K562 (cell line): ENCODE measurements at regions of chr9 and their contacts with region 1.

Region 1: DNA sequence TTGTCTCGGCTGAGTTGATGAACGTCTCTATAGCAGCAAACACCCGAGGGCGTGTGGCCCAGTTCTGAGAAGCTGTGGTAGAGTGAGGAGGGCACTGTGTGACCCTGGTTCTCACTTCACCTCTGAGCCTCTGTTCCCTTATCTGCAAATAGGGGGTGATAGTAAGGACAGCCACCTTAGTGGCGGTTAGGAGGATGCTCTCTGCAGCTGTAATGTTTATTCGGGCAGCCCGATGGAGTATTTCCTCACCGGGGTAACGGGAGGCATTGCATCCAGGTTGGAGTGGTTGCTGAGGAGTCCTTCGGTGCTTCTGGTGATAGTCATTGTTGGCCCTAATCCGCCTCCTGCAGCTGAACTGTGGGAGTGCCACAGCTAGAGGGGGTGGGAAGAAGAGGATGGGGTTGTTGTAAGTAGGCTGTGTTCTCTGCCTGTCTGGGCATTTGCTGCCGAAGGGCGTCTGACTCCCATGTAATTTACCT is 13.9 kb downstream of the PRRC2B start:
- DNase-seq: peak; percentile 34 to 61 (median 48)
- ATAC-seq: peak; percentile 77
- H3K4me3 ChIP-seq: no peak overlapping the region
- H3K27ac ChIP-seq: no peak overlapping the region
- H3K4me1 ChIP-seq: peaks cover 37 to 40% of the 10 kb centered on the region in 2 experiments; a peak in 4 of 5 replicates
- H3K27me3 ChIP-seq: no peaks in the 10 kb centered on the region
- CTCF ChIP-seq: peak; percentile 45 to 57 (median 53); a peak in 5 of 6 replicates
- EP300 ChIP-seq: no peak
- POLR2A ChIP-seq: no peak
- RAD21 ChIP-seq: peak in 1 of 2 experiments; percentile 14; a peak in 1 of 4 replicates

Region 2: GRCh38 chr9:131266266-131267229 is 141.2 kb before region 1 on chr9:
- CTCF ChIA-PET with region 1: no interaction called
- POLR2A ChIA-PET with region 1: no interaction called
- in situ Hi-C with region 1: no loop called
- intact Hi-C with region 1: no loop called
- DNase-seq: peak; percentile 38 to 66 (median 60)
- ATAC-seq: peak; percentile 2; the same call in 2 of the 3 replicates
- H3K4me3 ChIP-seq: no peak overlapping the region
- H3K27ac ChIP-seq: no peak overlapping the region
- H3K4me1 ChIP-seq: peaks cover 21 to 62% of the 10 kb centered on the region in 2 experiments
- H3K27me3 ChIP-seq: no peaks in the 10 kb centered on the region; a peak in 1 of 5 replicates
- CTCF ChIP-seq: no peak
- EP300 ChIP-seq: no peak
- POLR2A ChIP-seq: no peak
- RAD21 ChIP-seq: no peak

Region 3: GRCh38 chr9:131394464-131395156 is 13.1 kb before region 1 on chr9:
- CTCF ChIA-PET with region 1: no interaction called
- POLR2A ChIA-PET with region 1: interaction called, 78 read pairs
- in situ Hi-C with region 1: no loop called
- intact Hi-C with region 1: no loop called
- DNase-seq: peak; percentile 64 to 85 (median 80)
- ATAC-seq: peak; percentile 70
- H3K4me3 ChIP-seq: peak overlapping the region; percentile 96
- H3K27ac ChIP-seq: peak overlapping the region; percentile 89
- H3K4me1 ChIP-seq: peaks cover 26 to 33% of the 10 kb centered on the region in 2 experiments
- H3K27me3 ChIP-seq: no peaks in the 10 kb centered on the region
- CTCF ChIP-seq: no peak
- EP300 ChIP-seq: no peak
- POLR2A ChIP-seq: no peak; the same call in 1 of the 2 replicates
- RAD21 ChIP-seq: no peak

Region 4: DNA sequence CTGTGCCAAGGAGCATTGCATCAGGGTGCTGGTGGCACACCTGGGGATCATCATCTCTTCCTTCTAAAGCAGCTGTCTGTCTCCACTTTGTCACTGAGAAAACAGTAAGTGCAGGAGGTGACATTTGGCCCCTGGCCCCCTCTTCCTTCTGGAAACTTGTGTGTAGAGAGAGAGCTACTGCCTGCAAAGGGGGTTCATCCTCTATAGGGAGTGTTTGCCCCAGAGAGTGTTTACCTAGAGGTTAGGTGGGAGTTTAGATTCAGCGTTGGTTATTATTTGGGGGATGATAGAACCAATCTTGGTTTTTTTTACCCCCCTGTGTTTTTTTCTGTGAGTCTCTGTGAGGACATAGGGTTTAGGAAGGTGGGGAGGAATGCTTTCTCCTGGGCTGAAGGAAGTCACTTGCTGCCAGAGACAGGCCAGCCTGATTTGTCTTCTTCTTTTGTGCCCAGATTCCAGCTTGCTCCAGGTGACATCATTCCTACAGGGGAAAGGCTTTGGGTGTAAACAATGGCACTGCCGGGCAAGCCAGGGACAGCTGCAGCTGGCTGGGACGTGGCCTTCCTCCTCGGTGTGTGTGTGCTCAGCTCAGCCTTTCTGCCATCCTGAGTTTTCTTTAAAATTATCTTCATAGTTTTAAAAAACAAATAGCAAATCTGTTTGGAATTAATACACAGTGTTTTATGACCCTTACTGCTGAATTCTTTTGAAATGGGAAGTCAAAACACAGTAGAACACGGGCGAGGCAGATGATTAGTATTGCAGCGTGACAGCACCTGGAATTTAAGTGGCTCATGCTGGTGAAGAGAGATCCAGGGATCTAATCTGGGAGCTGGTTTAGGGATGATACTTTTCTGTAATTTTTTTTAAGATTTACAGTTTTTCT is 10.6 kb after region 1 on chr9:
- CTCF ChIA-PET with region 1: no interaction called
- POLR2A ChIA-PET with region 1: interaction called, 43 read pairs
- in situ Hi-C with region 1: no loop called
- intact Hi-C with region 1: no loop called
- DNase-seq: no peak
- ATAC-seq: no peak
- H3K4me3 ChIP-seq: no peak overlapping the region
- H3K27ac ChIP-seq: peak overlapping the region; percentile 28; the same call in 2 of the 3 replicates
- H3K4me1 ChIP-seq: peaks cover 26% of the 10 kb centered on the region in 2 experiments; a peak in 4 of 5 replicates
- H3K27me3 ChIP-seq: no peaks in the 10 kb centered on the region
- CTCF ChIP-seq: no peak
- EP300 ChIP-seq: no peak
- POLR2A ChIP-seq: no peak
- RAD21 ChIP-seq: no peak